Left ventricle myocardium superior (tissue), 1 donor: ENCODE measurements at regions of chr1 and their contacts with region 1.

Region 1: DNA sequence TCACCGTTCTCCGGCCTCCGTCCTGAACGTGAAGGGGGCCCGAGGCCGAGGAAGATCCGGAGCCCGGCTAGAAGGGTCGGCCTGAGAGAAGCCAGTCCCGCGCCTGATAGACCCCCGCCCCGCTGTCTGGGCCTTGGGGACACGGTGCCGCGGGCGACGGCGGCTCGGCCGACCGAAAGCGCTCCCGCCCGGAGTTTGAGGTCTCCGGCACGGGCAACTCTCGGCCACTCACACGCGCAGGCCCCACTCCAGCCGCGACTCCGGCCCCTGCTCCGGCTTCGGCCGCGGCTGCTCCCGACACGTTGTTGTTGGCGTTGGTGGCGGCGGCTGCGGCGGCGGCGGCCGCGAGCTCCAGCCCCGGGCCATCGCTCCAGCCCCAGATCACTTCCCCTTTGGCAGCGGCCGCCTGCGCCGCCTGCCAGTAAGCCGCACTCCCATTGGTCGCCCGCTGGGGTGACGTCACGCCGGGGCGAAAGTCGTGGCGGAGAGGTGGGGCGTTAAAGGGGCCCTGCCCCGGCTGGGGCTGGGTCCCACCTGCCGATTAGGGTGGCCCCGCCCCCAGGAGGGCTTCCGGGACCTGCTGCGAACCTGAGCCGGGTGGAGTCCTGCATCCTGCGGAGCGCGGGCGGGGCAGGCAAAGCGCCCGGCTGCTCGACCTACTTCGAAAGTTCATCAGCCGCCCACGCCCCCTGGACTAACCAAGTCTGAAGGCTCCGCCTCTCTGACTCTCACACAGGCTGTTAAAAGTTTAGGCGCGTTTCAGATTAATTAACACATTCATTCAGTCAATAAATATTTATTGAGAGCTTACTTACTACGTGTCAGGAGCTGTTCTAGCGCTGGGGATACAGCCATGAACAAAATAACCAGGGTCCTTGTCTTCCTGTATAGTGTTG is at the start of gene EFCAB14:
- DNase-seq: peak; percentile 97
- ATAC-seq: peak; percentile 100
- total RNA-seq, gene EFCAB14: 55.3 TPM

Region 2: GRCh38 chr1:46616277-46617107 is 102.5 kb before region 1 on chr1 and contains the start of gene MOB3C:
- intact Hi-C with region 1: loop called (anchors 10 kb)
- DNase-seq: peak; percentile 92
- ATAC-seq: peak; percentile 94
- total RNA-seq, gene MOB3C: 11.2 TPM

Region 3: DNA sequence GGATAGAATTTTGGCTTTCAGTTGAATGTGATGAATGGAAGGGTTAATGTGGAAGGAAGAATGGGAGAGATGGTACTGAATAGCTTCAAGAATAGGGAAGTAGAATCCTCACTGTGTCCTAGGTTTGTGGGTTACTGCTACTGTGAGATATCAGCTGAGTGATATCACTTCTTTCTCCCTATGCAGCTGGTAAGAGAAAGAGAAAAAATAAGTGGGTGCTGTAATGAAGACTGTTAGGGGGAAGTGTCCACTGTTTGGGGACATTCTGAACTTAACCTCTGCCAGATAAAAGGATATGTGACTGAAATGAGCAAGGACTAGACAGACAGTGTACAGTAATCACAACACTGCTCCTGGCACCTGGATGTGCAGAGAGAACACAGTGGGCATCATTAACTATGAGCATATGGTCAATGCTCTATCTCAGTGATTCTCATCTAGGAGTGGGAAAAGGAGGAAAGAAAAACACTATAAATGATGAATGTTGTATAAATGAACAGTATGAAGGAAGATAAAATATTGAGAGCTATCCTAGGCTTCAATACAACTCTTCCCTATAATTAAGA is 76.8 kb before region 1 on chr1:
- intact Hi-C with region 1: no loop called
- DNase-seq: no peak
- ATAC-seq: no peak

Region 4: GRCh38 chr1:47211796-47212269 is 492.9 kb after region 1 on chr1:
- intact Hi-C with region 1: no loop called
- DNase-seq: peak; percentile 49
- ATAC-seq: peak; percentile 86